ENCODE measurements at regions of chr5 and their contacts with region 1.

Region 1: GRCh38 chr5:151002250-151002649 is 18.1 kb upstream of the GPX3 start:
- DNase-seq: peak; percentile 28
- ATAC-seq: peak; percentile 68
- H3K4me3 ChIP-seq: no peak overlapping the region
- H3K27ac ChIP-seq: no peak overlapping the region
- H3K4me1 ChIP-seq: peaks cover 0 to 16% of the 10 kb centered on the region in 2 experiments; a peak in 2 of 4 replicates
- H3K27me3 ChIP-seq: peaks cover 10% of the 10 kb centered on the region; the same call in 1 of the 2 replicates
- CTCF ChIP-seq: peak; percentile 25 to 87 (median 59); a peak in 5 of 6 replicates
- POLR2A ChIP-seq: no peak
- RAD21 ChIP-seq: peak; percentile 92

Region 2: DNA sequence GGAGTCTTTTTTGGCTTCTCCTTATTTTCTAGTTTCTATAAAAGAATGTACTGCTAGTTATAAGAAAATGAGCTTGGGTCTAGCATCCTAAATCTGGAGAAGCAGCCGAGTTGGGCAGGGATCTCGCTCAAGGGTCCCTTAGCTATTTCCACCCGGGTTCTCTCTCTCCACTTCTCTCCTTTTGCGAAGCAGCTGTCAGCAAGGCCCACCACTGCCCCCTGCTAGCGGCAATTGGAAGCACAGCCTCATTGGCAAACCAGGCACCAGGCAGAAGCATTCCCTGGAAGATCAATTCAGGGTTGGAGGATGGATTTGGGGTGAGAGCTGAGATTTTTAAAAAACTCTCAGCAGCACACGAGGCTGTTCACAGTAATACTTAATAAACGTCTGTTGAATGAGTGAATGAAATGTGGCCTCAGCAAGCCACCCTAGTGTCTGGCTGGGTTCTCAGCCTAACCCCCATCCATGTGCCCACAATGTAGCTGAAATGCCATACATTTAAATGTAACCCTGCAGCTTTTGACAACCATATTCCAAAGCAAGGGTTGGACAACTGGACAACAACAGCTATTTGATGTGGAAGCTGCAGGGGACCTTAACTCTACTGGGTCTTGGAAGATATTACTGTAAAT is 113.1 kb after region 1 on chr5:
- CTCF ChIA-PET with region 1: interaction called, 47 read pairs
- POLR2A ChIA-PET with region 1: interaction called, 3 read pairs
- RAD21 ChIA-PET with region 1: interaction called in 1 of 2 experiments, 12 read pairs
- intact Hi-C with region 1: loop called (anchors 1 kb)
- DNase-seq: peak; percentile 32
- ATAC-seq: peak; percentile 93
- H3K4me3 ChIP-seq: no peak overlapping the region
- H3K27ac ChIP-seq: no peak overlapping the region
- H3K4me1 ChIP-seq: no peaks in the 10 kb centered on the region
- H3K27me3 ChIP-seq: no peaks in the 10 kb centered on the region
- CTCF ChIP-seq: peak; percentile 94 to 96 (median 95)
- POLR2A ChIP-seq: no peak
- RAD21 ChIP-seq: peak; percentile 97

Region 3: GRCh38 chr5:151164686-151165392 is 162.6 kb after region 1 on chr5:
- CTCF ChIA-PET with region 1: interaction called, 19 read pairs
- POLR2A ChIA-PET with region 1: no interaction called
- RAD21 ChIA-PET with region 1: interaction called in 1 of 2 experiments, 4 read pairs
- intact Hi-C with region 1: loop called (anchors 2 kb)
- DNase-seq: peak; percentile 77
- ATAC-seq: peak; percentile 99
- H3K4me3 ChIP-seq: no peak overlapping the region
- H3K27ac ChIP-seq: no peak overlapping the region
- H3K4me1 ChIP-seq: peaks cover 0 to 8% of the 10 kb centered on the region in 2 experiments; a peak in 2 of 4 replicates
- H3K27me3 ChIP-seq: no peaks in the 10 kb centered on the region
- CTCF ChIP-seq: peak; percentile 91 to 95 (median 91)
- POLR2A ChIP-seq: no peak
- RAD21 ChIP-seq: peak; percentile 98

Region 4: DNA sequence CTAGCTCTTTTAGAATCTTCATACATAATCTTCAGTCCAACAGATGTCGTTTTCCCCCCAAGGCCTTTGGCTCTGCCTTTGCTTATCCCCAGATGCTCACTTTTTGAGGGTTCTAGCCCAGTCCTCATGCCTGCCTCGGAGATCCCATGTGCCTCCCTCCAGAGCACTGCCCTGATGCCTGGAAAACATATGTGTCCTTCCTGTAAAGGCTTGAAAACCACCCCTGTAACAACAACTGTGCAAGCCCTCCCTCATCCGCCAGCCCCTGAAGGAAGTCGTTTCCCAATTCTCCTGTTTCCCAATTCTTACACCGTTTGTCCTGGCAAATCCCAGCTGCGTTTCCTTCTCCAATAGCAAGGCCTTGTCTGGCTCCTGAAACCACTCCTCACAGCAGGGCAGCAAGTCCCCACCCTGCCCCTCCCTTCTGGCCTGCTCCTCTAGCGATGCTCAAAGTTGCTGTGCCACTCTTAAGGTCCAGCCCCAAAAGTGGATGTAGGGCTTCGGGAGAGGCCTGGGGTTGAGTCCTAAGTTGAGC is 497.3 kb after region 1 on chr5:
- CTCF ChIA-PET with region 1: no interaction called
- POLR2A ChIA-PET with region 1: no interaction called
- RAD21 ChIA-PET with region 1: no interaction called
- intact Hi-C with region 1: loop called (anchors 1 kb)
- DNase-seq: no peak
- ATAC-seq: no peak
- H3K4me3 ChIP-seq: no peak overlapping the region
- H3K27ac ChIP-seq: no peak overlapping the region
- H3K4me1 ChIP-seq: peaks cover 0 to 2% of the 10 kb centered on the region in 2 experiments; a peak in 1 of 4 replicates
- H3K27me3 ChIP-seq: no peaks in the 10 kb centered on the region
- CTCF ChIP-seq: no peak
- POLR2A ChIP-seq: no peak
- RAD21 ChIP-seq: no peak